Activated CD4-positive, alpha-beta T cell treated with anti-CD3 and anti-CD28 coated beads for 36 hours (primary cell): ENCODE measurements at regions of chr4 and their contacts with region 1.

Region 1: DNA sequence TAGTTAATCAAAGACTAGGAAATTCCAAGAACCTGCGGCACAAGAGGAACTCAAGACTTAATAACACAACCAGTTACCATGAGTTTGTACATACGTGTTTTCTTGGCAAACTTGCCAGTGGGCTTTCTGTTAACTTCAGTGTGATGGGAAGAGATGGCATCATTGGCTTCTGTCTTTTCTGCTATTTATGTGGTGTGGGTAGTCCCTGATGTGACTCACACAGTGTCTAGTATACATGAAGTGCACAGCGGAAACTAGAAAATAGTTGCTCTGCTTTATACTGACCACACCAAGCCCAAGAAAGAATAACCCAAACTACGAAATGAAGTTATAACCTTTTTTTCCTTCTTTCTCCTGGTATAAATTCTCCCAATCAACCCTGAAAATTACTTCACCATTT is 24.5 kb downstream of the DAPP1 start:
- DNase-seq: no peak
- ATAC-seq: peak; percentile 86
- H3K4me3 Mint-ChIP-seq: no peak overlapping the region
- H3K27ac Mint-ChIP-seq: peak overlapping the region; percentile 80
- H3K4me1 Mint-ChIP-seq: peaks cover 36% of the 10 kb centered on the region
- H3K27me3 Mint-ChIP-seq: no peaks in the 10 kb centered on the region

Region 2: GRCh38 chr4:99827454-99827853 is 13.7 kb before region 1 on chr4:
- CTCF ChIA-PET with region 1: no interaction called
- POLR2A ChIA-PET with region 1: no interaction called
- intact Hi-C with region 1: loop called in 1 of 2 experiments (anchors 2 kb)
- DNase-seq: no peak
- ATAC-seq: peak; percentile 25
- H3K4me3 Mint-ChIP-seq: no peak overlapping the region
- H3K27ac Mint-ChIP-seq: peak overlapping the region; percentile 47
- H3K4me1 Mint-ChIP-seq: peaks cover 45% of the 10 kb centered on the region
- H3K27me3 Mint-ChIP-seq: no peaks in the 10 kb centered on the region